H1 (cell line): ENCODE measurements at regions of chr2 and their contacts with region 1.

Region 1: GRCh38 chr2:159146996-159147666 is 139.4 kb downstream of the WDSUB1 start:
- DNase-seq: no peak
- H3K4me3 ChIP-seq: no peak overlapping the region
- H3K27ac ChIP-seq: no peak overlapping the region
- H3K4me1 ChIP-seq: peaks cover 0 to 8% (median 2%) of the 10 kb centered on the region in 4 experiments; a peak in 3 of 7 replicates
- H3K27me3 ChIP-seq: no peaks in the 10 kb centered on the region
- CTCF ChIP-seq: no peak
- EP300 ChIP-seq: no peak
- POLR2A ChIP-seq: no peak
- RAD21 ChIP-seq: no peak

Region 2: GRCh38 chr2:159160954-159161353 is 13.8 kb after region 1 on chr2:
- CTCF ChIA-PET with region 1: interaction called, 19 read pairs
- POLR2A ChIA-PET with region 1: no interaction called
- DNase-seq: no peak
- H3K4me3 ChIP-seq: no peak overlapping the region
- H3K27ac ChIP-seq: no peak overlapping the region
- H3K4me1 ChIP-seq: peaks cover 0 to 2% (median 0%) of the 10 kb centered on the region in 4 experiments; a peak in 1 of 7 replicates
- H3K27me3 ChIP-seq: no peaks in the 10 kb centered on the region
- CTCF ChIP-seq: no peak
- EP300 ChIP-seq: no peak
- POLR2A ChIP-seq: no peak
- RAD21 ChIP-seq: no peak